GM12878 (cell line): ENCODE measurements at regions of chr3 and their contacts with region 1.

Region 1: GRCh38 chr3:94101851-94102250 is 39.0 kb downstream of the NSUN3 start:
- DNase-seq: no peak
- ATAC-seq: 0 out of 3 replicates have a peak, but pooled peaks have one; percentile 17
- H3K4me3 ChIP-seq: no peak overlapping the region
- H3K27ac ChIP-seq: no peak overlapping the region
- H3K4me1 ChIP-seq: no peaks in the 10 kb centered on the region
- H3K27me3 ChIP-seq: no peaks in the 10 kb centered on the region
- CTCF ChIP-seq: no peak; a peak in 1 of 6 replicates
- EP300 ChIP-seq: no peak
- POLR2A ChIP-seq: no peak
- RAD21 ChIP-seq: peak; percentile 22; the same call in 1 of the 2 replicates

Region 2: DNA sequence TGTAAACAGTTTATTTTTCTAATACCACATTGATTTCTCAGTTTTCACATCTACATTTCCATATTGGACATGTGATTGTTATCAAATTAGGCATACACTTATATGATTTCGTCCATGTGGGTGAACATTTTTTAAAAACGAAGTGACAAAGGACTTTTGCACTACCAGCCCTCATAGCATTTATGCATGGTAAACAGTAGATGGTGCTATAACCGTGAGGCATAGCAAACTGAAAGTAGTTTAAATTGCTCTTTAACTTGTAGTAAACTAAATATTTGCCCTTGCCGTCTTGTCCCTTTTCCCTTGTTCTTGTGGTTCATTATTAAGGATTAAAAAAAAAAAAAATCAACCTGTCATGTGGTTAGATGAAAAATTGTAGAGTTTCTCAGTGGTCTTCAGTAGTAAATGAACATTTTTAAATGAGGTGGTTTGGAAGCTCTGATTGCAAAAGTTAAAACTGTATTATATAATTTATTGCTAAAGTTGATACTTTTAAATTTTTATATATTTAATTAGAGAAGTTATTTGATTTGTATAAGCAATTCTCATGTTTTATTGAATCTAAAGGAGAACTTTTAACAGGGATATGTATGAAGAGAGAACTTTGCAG is 97.4 kb before region 1 on chr3:
- CTCF ChIA-PET with region 1: interaction called, 32 read pairs
- POLR2A ChIA-PET with region 1: no interaction called
- RAD21 ChIA-PET with region 1: interaction called, 31 read pairs
- SMC1A ChIA-PET with region 1: interaction called, 10 read pairs
- in situ Hi-C with region 1: no loop called
- intact Hi-C with region 1: loop called (anchors 1 kb)
- DNase-seq: peak; percentile 44
- ATAC-seq: peak; percentile 92
- H3K4me3 ChIP-seq: no peak overlapping the region
- H3K27ac ChIP-seq: no peak overlapping the region; the same call in 1 of the 2 replicates
- H3K4me1 ChIP-seq: no peaks in the 10 kb centered on the region
- H3K27me3 ChIP-seq: no peaks in the 10 kb centered on the region
- CTCF ChIP-seq: peak; percentile 78 to 90 (median 84)
- EP300 ChIP-seq: no peak
- POLR2A ChIP-seq: no peak
- RAD21 ChIP-seq: peak; percentile 95

Region 3: GRCh38 chr3:94036909-94037507 is 64.8 kb before region 1 on chr3:
- CTCF ChIA-PET with region 1: interaction called, 8 read pairs
- POLR2A ChIA-PET with region 1: no interaction called
- RAD21 ChIA-PET with region 1: interaction called, 10 read pairs
- SMC1A ChIA-PET with region 1: interaction called, 5 read pairs
- in situ Hi-C with region 1: no loop called
- intact Hi-C with region 1: no loop called
- DNase-seq: no peak
- ATAC-seq: peak; percentile 92
- H3K4me3 ChIP-seq: no peak overlapping the region
- H3K27ac ChIP-seq: no peak overlapping the region
- H3K4me1 ChIP-seq: no peaks in the 10 kb centered on the region
- H3K27me3 ChIP-seq: no peaks in the 10 kb centered on the region
- CTCF ChIP-seq: peak; percentile 43 to 59 (median 50)
- EP300 ChIP-seq: no peak
- POLR2A ChIP-seq: no peak
- RAD21 ChIP-seq: 0 out of 2 replicates have a peak, but pooled peaks have one; percentile 15

Region 4: GRCh38 chr3:94062431-94063404 is 39.1 kb before region 1 on chr3 and contains the starts of genes DHFR2 and NSUN3:
- CTCF ChIA-PET with region 1: interaction called, 7 read pairs
- POLR2A ChIA-PET with region 1: no interaction called
- RAD21 ChIA-PET with region 1: interaction called, 11 read pairs
- SMC1A ChIA-PET with region 1: interaction called, 7 read pairs
- in situ Hi-C with region 1: no loop called
- intact Hi-C with region 1: no loop called
- DNase-seq: peak; percentile 95
- ATAC-seq: peak; percentile 92
- H3K4me3 ChIP-seq: peak within 1 kb of the TSS; percentile 84
- H3K27ac ChIP-seq: peak within 1 kb of the TSS; percentile 100
- H3K4me1 ChIP-seq: no peaks in the 10 kb centered on the region
- H3K27me3 ChIP-seq: no peaks in the 10 kb centered on the region
- CTCF ChIP-seq: no peak
- EP300 ChIP-seq: no peak
- POLR2A ChIP-seq: peak; percentile 78
- RAD21 ChIP-seq: no peak
- polyA plus RNA-seq, gene DHFR2: 1.8 to 2.7 TPM
- polyA plus RNA-seq, gene NSUN3: 9.1 to 10.4 TPM

Region 5: GRCh38 chr3:94896994-94897393 is 795.1 kb after region 1 on chr3:
- CTCF ChIA-PET with region 1: no interaction called
- POLR2A ChIA-PET with region 1: no interaction called
- RAD21 ChIA-PET with region 1: no interaction called
- SMC1A ChIA-PET with region 1: no interaction called
- in situ Hi-C with region 1: no loop called
- intact Hi-C with region 1: no loop called
- DNase-seq: no peak
- ATAC-seq: peak; percentile 63
- H3K4me3 ChIP-seq: no peak overlapping the region
- H3K27ac ChIP-seq: no peak overlapping the region
- H3K4me1 ChIP-seq: no peaks in the 10 kb centered on the region
- H3K27me3 ChIP-seq: no peaks in the 10 kb centered on the region
- CTCF ChIP-seq: no peak
- EP300 ChIP-seq: no peak
- POLR2A ChIP-seq: no peak
- RAD21 ChIP-seq: no peak